Right ventricle myocardium superior (tissue), 1 donor: ENCODE measurements at regions of chr12 and their contacts with region 1.

Region 1: DNA sequence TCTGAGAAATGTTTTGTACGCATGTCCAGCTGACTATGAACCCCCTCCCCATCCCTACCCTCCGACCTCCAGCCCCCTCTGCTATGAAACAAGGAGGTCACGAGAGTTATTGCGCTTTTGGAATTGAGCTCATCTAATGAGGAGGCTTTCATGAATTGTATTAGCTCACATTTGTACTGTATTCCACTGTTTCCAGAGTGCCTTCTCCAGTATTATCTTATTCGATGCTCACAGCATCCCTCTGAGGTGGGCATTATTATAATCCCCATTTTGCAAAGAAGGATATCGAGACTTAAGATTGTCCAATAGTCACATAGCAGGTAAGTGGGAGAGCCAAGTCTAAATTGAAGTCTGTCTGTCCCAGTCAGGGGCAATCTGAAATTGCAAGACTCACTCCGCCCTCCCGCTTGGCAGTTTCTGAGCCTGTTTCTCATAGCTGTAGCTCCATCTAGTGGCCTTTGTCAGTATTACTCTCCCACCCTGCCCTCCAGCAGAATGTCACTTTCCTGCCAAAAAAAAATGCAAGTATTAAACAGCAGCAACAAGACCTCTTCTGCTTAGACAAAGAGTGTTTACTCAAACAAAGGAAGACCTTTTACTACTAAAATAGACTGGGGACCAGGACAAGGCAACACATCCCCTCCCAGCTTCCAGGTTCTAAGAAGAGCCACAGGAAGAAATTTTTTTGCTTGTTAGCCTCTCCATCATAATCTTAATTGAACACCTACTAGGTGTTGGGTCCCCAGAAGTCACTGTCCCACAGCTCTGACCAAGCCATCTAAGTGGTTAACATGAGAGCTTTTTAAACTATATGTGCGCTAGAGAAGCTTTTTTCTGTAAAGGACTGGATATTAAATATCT is 48.6 kb upstream of the TMEM233 start:
- DNase-seq: peak; percentile 57
- ATAC-seq: peak; percentile 67

Region 2: DNA sequence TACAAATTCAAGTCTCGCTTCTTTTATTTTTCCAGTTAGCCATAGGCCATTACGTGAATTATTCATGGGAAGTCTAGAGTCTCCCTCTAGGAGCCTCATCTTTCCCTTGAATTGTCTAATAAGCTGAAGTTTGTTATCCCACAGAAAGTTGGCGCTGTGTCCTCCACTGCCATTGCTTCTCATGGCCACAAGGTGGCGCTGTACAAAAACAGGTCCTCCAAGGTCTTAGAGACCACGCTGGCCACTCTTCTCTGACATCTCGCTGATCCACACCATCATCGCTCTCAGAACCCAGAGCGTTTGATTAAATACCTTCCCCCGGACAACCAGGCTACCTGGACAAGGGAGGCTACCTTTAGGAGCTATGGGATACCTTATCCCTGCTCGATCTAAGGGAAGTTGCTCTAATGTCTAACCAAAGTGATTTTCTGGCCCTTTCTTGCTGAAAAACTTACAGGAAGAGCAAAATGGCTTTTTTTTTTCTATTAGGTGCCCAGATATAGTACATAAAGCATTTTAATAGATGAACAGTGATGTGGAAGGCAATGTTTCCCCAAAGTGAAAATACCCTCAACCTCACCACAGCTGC is 100.4 kb before region 1 on chr12:
- intact Hi-C with region 1: loop called (anchors 5 kb)
- DNase-seq: no peak
- ATAC-seq: peak; percentile 45